Mammary epithelial cell (primary cell): ENCODE measurements at regions of chr1 and their contacts with region 1.

Region 1: DNA sequence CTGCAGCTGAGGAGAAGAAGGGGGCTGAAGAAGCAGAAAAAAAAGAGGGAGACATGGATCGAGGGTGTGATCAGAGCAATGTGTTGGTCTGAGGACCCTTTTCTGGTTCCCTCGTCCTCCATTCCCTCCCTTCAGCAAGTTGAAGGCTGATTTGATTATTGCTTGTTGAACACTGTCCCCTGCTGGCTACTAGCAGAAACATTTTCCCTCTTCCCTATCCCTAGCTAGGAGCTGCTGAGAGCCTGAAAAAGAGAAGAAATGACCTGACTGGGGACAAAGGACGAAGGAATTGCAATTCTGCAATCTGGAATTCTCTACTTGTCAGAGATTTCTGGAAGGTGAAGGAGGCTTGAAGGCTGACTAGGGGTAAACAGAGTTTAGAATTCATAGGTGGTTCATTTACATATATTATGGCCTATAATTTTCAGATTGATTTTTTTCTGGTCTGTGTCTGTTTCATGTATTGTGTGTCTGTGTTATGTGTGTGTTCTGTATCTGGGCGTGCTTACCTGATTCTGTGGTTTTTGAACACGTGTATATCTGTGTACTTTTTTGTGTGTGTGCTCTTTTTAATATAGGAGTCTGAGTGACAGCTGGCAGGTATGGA is 9.8 kb downstream of the NHLH1 start:
- DNase-seq: peak; percentile 46
- H3K4me3 ChIP-seq: no peak overlapping the region
- H3K27ac ChIP-seq: no peak overlapping the region
- H3K4me1 ChIP-seq: peaks cover 3% of the 10 kb centered on the region
- H3K27me3 ChIP-seq: no peaks in the 10 kb centered on the region
- CTCF ChIP-seq: peak; percentile 96 to 97

Region 2: GRCh38 chr1:160342953-160343869 is 33.4 kb before region 1 on chr1 and contains the starts of genes COPA and NCSTN:
- CTCF ChIA-PET with region 1: no interaction called
- dilution Hi-C with region 1: no loop called
- in situ Hi-C with region 1: no loop called
- intact Hi-C with region 1: loop called (anchors 2 kb)
- DNase-seq: peak; percentile 92
- H3K4me3 ChIP-seq: peak within 1 kb of the TSS; percentile 89 to 98 (median 95)
- H3K27ac ChIP-seq: peak within 1 kb of the TSS; percentile 90
- H3K4me1 ChIP-seq: peaks cover 9% of the 10 kb centered on the region
- H3K27me3 ChIP-seq: no peaks in the 10 kb centered on the region
- CTCF ChIP-seq: peak in 1 of 2 donors; percentile 41
- total RNA-seq, gene COPA: 155 to 173 TPM
- total RNA-seq, gene NCSTN: 85.0 to 102 TPM

Region 3: DNA sequence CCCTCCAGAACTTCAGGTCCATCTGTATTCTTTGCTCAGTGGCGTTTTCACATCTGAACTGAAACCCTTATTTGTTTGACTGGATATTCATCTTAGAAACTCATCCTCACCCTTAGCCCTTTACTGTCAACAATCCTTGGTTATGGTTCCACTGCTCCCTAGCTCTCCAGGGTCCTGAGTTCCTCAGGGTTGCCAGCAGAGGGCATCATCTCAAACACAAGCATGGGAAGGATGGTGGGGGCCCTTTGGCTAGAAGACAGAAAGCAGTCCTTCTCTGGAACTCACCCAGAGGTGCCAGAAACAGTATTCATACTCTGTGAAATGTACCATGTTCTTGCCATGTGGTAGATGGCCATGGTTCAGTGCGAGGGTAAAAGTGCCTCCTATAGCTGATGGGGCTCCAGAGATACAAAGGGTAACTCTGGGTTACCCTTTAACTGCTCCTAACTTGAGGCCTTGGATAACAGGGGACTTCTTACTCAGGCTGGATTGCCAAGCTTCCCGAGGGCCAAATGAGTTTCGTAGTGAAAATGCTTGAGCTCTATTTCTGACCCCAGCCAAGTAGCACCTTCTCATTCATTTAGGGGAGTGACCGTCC is 22.1 kb before region 1 on chr1:
- CTCF ChIA-PET with region 1: interaction called, 3 read pairs
- dilution Hi-C with region 1: no loop called
- in situ Hi-C with region 1: no loop called
- intact Hi-C with region 1: loop called (anchors 1 kb)
- DNase-seq: no peak
- H3K4me3 ChIP-seq: no peak overlapping the region
- H3K27ac ChIP-seq: no peak overlapping the region
- H3K4me1 ChIP-seq: no peaks in the 10 kb centered on the region
- H3K27me3 ChIP-seq: no peaks in the 10 kb centered on the region
- CTCF ChIP-seq: peak; percentile 57 to 63